HAP-1 (cell line): ENCODE measurements at regions of chr10 and their contacts with region 1.

Region 1: GRCh38 chr10:68301790-68302502 is 29.9 kb upstream of the HNRNPH3 start:
- DNase-seq: peak; percentile 10 to 66
- H3K4me3 ChIP-seq: no peak overlapping the region
- H3K4me1 ChIP-seq: no peaks in the 10 kb centered on the region
- H3K27me3 ChIP-seq: no peaks in the 10 kb centered on the region

Region 2: DNA sequence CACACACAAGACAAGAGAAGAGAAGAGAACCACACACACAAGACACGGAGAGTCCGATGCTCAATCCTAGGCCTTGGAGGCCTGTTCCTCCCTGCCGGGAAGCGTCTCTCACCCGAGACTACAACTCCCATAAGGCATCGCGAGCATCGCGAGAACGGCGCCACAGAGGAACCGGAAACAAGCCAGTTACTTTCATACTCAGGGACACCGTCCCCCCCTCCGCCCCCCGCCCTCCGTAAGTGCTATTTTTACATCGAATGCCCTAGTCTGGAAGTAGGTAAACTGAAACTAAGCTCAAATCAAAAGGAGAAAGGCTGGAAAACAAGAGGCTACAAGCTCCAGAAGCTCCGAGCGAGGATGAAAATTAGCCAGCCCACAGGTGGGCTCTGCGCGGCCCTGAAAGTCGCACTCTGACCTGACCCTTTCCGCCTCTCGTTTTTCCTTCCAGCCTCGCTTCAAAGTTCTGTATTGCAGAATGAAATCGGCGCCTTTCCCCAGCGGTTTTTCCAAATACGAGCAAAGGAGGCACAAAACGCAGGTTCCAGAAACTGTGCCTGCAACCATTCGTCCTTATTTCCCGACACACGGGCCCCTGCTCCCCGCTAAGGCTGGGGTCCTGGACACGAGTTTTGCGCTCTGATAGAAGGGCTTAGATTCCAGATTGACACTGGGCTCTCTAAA is 452.5 kb before region 1 on chr10:
- in situ Hi-C with region 1: loop called (anchors 10 kb)
- DNase-seq: peak; percentile 87 to 95
- H3K4me3 ChIP-seq: peak overlapping the region; percentile 74
- H3K4me1 ChIP-seq: peaks cover 13% of the 10 kb centered on the region
- H3K27me3 ChIP-seq: no peaks in the 10 kb centered on the region

Region 3: GRCh38 chr10:68212721-68213352 is 89.1 kb before region 1 on chr10:
- in situ Hi-C with region 1: loop called (anchors 5 kb)
- DNase-seq: peak in 1 of 2 experiments; percentile 19
- H3K4me3 ChIP-seq: no peak overlapping the region
- H3K4me1 ChIP-seq: no peaks in the 10 kb centered on the region
- H3K27me3 ChIP-seq: peaks cover 4% of the 10 kb centered on the region; the same call in 1 of the 2 replicates